ENCODE measurements at regions of chr6 and their contacts with region 1.

Region 1: GRCh38 chr6:2846873-2847224 is 5.2 kb upstream of the SERPINB1 start:
- DNase-seq: no peak
- ATAC-seq: no peak
- H3K4me3 ChIP-seq: no peak overlapping the region
- H3K4me3 Mint-ChIP-seq: peak overlapping the region in 2 of 3 donors; percentile 27 to 44
- H3K27ac ChIP-seq: peak overlapping the region; percentile 25
- H3K27ac Mint-ChIP-seq: peak overlapping the region; percentile 42 to 79
- H3K4me1 ChIP-seq: peaks cover 23 to 39% of the 10 kb centered on the region in 2 experiments
- H3K4me1 Mint-ChIP-seq: peaks cover 41 to 53% (median 46%) of the 10 kb centered on the region in 3 donors
- H3K27me3 ChIP-seq: no peaks in the 10 kb centered on the region
- H3K27me3 Mint-ChIP-seq: no peaks in the 10 kb centered on the region

Region 2: GRCh38 chr6:2791124-2791974 is 55.5 kb before region 1 on chr6:
- CTCF ChIA-PET with region 1: interaction called, 4 to 16 read pairs
- POLR2A ChIA-PET with region 1: no interaction called
- DNase-seq: peak in 32 of 35 experiments; percentile 17 to 71 (median 40)
- ATAC-seq: peak; percentile 66 to 78 (median 72)
- H3K4me3 ChIP-seq: no peak overlapping the region
- H3K4me3 Mint-ChIP-seq: peak overlapping the region in 1 of 3 donors; percentile 10
- H3K27ac ChIP-seq: no peak overlapping the region
- H3K27ac Mint-ChIP-seq: peak overlapping the region; percentile 77 to 84
- H3K4me1 ChIP-seq: peaks cover 10 to 21% of the 10 kb centered on the region in 2 experiments
- H3K4me1 Mint-ChIP-seq: peaks cover 25 to 40% (median 26%) of the 10 kb centered on the region in 3 donors
- H3K27me3 ChIP-seq: no peaks in the 10 kb centered on the region
- H3K27me3 Mint-ChIP-seq: no peaks in the 10 kb centered on the region

Region 3: DNA sequence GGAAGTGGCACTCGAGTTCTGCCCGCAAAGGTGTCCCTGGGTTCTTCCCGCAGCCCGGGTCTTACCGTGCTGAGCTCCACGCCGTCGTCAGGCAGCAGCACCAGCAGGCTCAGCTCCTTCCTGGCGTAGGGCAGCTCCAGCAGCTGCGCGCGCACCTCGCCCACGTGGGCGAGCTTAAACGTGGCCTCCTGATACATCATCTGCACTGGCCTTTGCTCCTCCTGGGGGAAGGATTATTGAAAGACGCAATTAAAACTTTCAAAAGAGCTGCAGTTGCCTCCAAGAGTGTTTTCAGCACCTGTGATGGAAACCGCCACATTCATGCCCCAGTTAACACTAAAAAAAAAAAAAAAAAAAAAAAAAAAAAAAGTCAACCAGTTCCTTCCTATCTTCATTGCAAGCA is 44.9 kb after region 1 on chr6:
- CTCF ChIA-PET with region 1: interaction called, 3 to 12 read pairs
- POLR2A ChIA-PET with region 1: interaction called, 4 to 10 read pairs
- DNase-seq: peak in 34 of 35 experiments; percentile 46 to 90 (median 75)
- ATAC-seq: peak; percentile 91 to 96 (median 91)
- H3K4me3 ChIP-seq: peak overlapping the region in 1 of 2 donors; percentile 5
- H3K4me3 Mint-ChIP-seq: peak overlapping the region; percentile 37 to 72 (median 53)
- H3K27ac ChIP-seq: peak overlapping the region; percentile 61
- H3K27ac Mint-ChIP-seq: peak overlapping the region; percentile 82 to 87
- H3K4me1 ChIP-seq: peaks cover 14 to 18% of the 10 kb centered on the region in 2 experiments
- H3K4me1 Mint-ChIP-seq: peaks cover 51 to 67% (median 64%) of the 10 kb centered on the region in 3 donors
- H3K27me3 ChIP-seq: no peaks in the 10 kb centered on the region
- H3K27me3 Mint-ChIP-seq: no peaks in the 10 kb centered on the region

Region 4: DNA sequence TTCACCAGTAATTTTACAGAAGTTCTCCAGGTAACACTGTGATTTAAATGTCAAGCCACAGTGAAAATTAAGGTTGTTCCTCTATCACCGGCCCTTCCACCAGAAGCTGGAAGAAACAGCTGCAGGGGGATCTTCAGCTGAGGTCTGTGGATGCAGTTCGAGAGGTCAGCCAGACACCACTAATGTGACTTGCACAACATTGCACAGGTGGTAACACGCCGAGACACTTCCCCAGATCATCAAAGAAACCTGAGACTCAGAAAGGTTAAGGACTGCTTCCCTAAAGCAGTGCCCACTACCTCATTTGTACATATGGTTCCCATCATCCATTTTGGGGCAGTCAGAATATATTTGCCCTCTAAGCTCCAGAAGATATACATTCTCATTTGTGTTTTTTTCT is 64.3 kb after region 1 on chr6:
- CTCF ChIA-PET with region 1: interaction called, 36 to 41 read pairs
- POLR2A ChIA-PET with region 1: interaction called, 3 read pairs
- DNase-seq: no peak
- ATAC-seq: no peak
- H3K4me3 ChIP-seq: no peak overlapping the region
- H3K4me3 Mint-ChIP-seq: no peak overlapping the region
- H3K27ac ChIP-seq: no peak overlapping the region
- H3K27ac Mint-ChIP-seq: peak overlapping the region in 1 of 2 donors; percentile 22
- H3K4me1 ChIP-seq: peaks cover 0 to 3% of the 10 kb centered on the region in 2 experiments
- H3K4me1 Mint-ChIP-seq: peaks cover 31 to 46% (median 46%) of the 10 kb centered on the region in 3 donors
- H3K27me3 ChIP-seq: no peaks in the 10 kb centered on the region
- H3K27me3 Mint-ChIP-seq: no peaks in the 10 kb centered on the region

Region 5: GRCh38 chr6:2940010-2940850 is 93.4 kb after region 1 on chr6:
- CTCF ChIA-PET with region 1: interaction called, 10 to 72 read pairs
- POLR2A ChIA-PET with region 1: interaction called, 6 to 23 read pairs
- DNase-seq: peak; percentile 35 to 87 (median 75)
- ATAC-seq: peak; percentile 72 to 77 (median 76)
- H3K4me3 ChIP-seq: peak overlapping the region; percentile 49 to 61
- H3K4me3 Mint-ChIP-seq: peak overlapping the region; percentile 80 to 84 (median 84)
- H3K27ac ChIP-seq: peak overlapping the region; percentile 76
- H3K27ac Mint-ChIP-seq: peak overlapping the region; percentile 93 to 95
- H3K4me1 ChIP-seq: peaks cover 55 to 73% of the 10 kb centered on the region in 2 experiments
- H3K4me1 Mint-ChIP-seq: peaks cover 56 to 72% (median 68%) of the 10 kb centered on the region in 3 donors
- H3K27me3 ChIP-seq: no peaks in the 10 kb centered on the region
- H3K27me3 Mint-ChIP-seq: no peaks in the 10 kb centered on the region